Ascending aorta (tissue), 2 donors: ENCODE measurements at regions of chr4 and their contacts with region 1.

Region 1: GRCh38 chr4:140095694-140096482 is 58.1 kb downstream of the MAML3 start:
- DNase-seq: peak in 1 of 2 donors; percentile 72
- H3K4me3 ChIP-seq: no peak overlapping the region
- H3K27ac ChIP-seq: peak overlapping the region; percentile 77
- H3K4me1 ChIP-seq: peaks cover 10 to 38% of the 10 kb centered on the region in 2 donors
- H3K27me3 ChIP-seq: no peaks in the 10 kb centered on the region
- CTCF ChIP-seq: no peak

Region 2: GRCh38 chr4:139484783-139485318 is 611.0 kb before region 1 on chr4:
- intact Hi-C with region 1: no loop called
- DNase-seq: no peak
- H3K4me3 ChIP-seq: no peak overlapping the region
- H3K27ac ChIP-seq: no peak overlapping the region
- H3K4me1 ChIP-seq: peaks cover 0 to 4% of the 10 kb centered on the region in 2 donors
- H3K27me3 ChIP-seq: no peaks in the 10 kb centered on the region
- CTCF ChIP-seq: no peak

Region 3: GRCh38 chr4:140061194-140061593 is 34.7 kb before region 1 on chr4:
- intact Hi-C with region 1: loop called (anchors 5 kb)
- DNase-seq: no peak
- H3K4me3 ChIP-seq: peak overlapping the region in 1 of 2 donors; percentile 48
- H3K27ac ChIP-seq: peak overlapping the region; percentile 59 to 71
- H3K4me1 ChIP-seq: peaks cover 0 to 11% of the 10 kb centered on the region in 2 donors
- H3K27me3 ChIP-seq: no peaks in the 10 kb centered on the region
- CTCF ChIP-seq: no peak